ENCODE measurements at regions of chr7 and their contacts with region 1.

Region 1: GRCh38 chr7:64768824-64769223 is 25.4 kb upstream of the ZNF138 start:
- DNase-seq: no peak
- ATAC-seq: no peak

Region 2: DNA sequence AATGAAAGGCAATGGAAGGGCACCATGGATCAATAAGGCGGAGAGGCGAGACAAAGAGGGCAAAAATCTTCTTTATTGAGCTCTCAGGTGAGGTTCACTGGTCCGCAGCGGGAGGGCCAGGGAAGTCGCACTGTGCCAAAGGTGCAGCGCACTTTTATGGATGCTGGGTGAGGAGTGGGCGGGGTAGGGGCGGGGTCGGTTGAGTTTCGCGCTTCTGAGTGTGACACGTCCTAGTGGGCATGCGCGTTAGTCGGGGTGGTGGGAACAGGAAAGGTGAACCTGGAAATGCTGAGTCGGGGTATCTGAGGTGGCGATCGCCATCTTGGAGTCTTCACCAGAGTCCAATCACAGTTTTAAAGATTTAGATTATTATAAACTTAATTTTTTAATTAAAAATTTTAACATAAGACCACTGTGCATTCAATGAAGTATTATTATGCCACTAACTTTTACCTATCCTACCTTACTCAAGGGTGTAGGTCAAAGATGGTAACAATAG is 71.0 kb after region 1 on chr7:
- intact Hi-C with region 1: loop called (anchors 2 kb)
- DNase-seq: no peak
- ATAC-seq: no peak

Measured in sciatic nerve (tissue), 2 donors.